H1 (cell line): ENCODE measurements at regions of chr1 and their contacts with region 1.

Region 1: DNA sequence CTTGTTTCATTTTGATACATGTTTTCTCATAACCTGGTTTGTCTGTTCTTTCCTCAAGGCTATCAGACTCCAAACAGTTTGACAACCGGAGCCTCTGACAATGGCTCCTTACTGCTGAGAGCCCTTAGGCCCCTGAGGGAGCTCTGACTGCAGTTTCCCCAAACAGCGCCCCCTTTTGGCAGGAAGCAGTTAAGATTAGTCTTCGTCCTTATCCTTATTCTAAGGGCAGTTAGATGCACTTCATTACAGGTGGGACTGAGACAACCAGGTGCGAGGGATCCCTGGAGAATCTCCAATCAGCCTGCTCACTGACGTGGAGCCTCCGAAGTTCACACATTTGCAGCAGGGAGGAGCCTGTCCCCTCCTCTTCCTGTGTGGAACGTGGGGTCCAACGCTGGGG is 393.1 kb downstream of the BRINP3 start:
- DNase-seq: peak; percentile 65 to 86
- H3K4me3 ChIP-seq: no peak overlapping the region
- H3K27ac ChIP-seq: no peak overlapping the region
- H3K4me1 ChIP-seq: no peaks in the 10 kb centered on the region
- H3K27me3 ChIP-seq: no peaks in the 10 kb centered on the region
- CTCF ChIP-seq: peak; percentile 57 to 83 (median 74)
- EP300 ChIP-seq: no peak
- POLR2A ChIP-seq: no peak
- RAD21 ChIP-seq: peak; percentile 61 to 73

Region 2: GRCh38 chr1:189740777-189741176 is 343.8 kb before region 1 on chr1:
- CTCF ChIA-PET with region 1: no interaction called
- POLR2A ChIA-PET with region 1: no interaction called
- DNase-seq: no peak
- H3K4me3 ChIP-seq: no peak overlapping the region
- H3K27ac ChIP-seq: no peak overlapping the region
- H3K4me1 ChIP-seq: no peaks in the 10 kb centered on the region
- H3K27me3 ChIP-seq: no peaks in the 10 kb centered on the region
- CTCF ChIP-seq: no peak
- EP300 ChIP-seq: no peak
- POLR2A ChIP-seq: no peak
- RAD21 ChIP-seq: no peak

Region 3: DNA sequence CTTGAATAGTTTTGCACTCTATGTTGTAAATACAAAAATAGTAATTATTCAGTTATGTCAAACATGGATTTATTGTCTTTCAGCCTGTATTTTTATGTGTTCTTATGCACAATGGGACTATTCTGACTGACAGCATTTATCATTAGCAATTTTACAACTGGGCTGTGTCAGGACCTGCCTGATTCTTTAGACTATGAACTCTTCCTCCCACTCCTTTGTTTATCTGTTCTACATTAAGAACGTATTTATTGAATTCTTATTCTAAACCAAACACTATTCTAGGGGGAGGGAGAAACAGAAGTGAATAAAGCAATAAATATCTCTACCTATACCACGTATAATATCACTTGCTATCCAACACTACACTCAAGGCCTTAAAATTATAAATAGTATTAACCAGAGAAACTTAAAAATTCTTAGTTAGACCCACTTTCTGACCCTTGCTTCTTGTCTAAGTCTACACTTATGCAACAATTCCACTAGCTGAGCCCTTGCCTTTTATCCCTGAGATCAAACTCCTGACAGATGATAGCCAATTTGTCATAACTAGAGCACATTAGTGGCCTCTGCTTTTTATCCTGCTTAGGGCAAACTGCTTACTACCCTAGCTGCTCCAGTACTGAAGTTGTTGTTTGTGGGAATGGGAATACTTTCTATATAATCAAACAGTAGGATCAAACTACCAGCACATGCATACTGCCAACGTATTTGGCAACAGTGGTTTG is 101.2 kb before region 1 on chr1:
- CTCF ChIA-PET with region 1: no interaction called
- POLR2A ChIA-PET with region 1: no interaction called
- DNase-seq: no peak
- H3K4me3 ChIP-seq: no peak overlapping the region
- H3K27ac ChIP-seq: no peak overlapping the region
- H3K4me1 ChIP-seq: no peaks in the 10 kb centered on the region
- H3K27me3 ChIP-seq: no peaks in the 10 kb centered on the region
- CTCF ChIP-seq: no peak
- EP300 ChIP-seq: no peak
- POLR2A ChIP-seq: no peak
- RAD21 ChIP-seq: no peak

Region 4: DNA sequence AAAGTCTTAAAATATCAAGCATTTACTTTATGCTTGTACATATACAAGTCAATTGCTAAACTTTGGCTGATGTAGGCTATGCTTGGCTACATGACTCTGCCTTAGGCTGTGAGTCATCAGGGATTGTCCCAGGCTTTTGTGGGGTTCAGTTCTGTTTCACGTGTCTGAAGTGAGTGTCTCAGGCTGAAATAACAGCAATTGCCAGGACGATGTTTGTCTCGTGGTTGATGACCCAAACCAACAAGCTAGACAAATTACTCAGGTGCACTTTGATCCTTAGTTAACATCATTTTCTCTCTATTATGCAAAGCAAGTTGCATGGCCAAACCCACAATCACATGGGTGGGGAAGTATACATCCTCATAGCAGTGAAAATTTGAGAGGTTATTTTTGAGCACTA is 17.0 kb before region 1 on chr1:
- CTCF ChIA-PET with region 1: interaction called, 17 read pairs
- POLR2A ChIA-PET with region 1: interaction called, 3 read pairs
- DNase-seq: no peak
- H3K4me3 ChIP-seq: no peak overlapping the region
- H3K27ac ChIP-seq: no peak overlapping the region
- H3K4me1 ChIP-seq: no peaks in the 10 kb centered on the region
- H3K27me3 ChIP-seq: no peaks in the 10 kb centered on the region
- CTCF ChIP-seq: no peak
- EP300 ChIP-seq: no peak
- POLR2A ChIP-seq: no peak
- RAD21 ChIP-seq: no peak

Region 5: DNA sequence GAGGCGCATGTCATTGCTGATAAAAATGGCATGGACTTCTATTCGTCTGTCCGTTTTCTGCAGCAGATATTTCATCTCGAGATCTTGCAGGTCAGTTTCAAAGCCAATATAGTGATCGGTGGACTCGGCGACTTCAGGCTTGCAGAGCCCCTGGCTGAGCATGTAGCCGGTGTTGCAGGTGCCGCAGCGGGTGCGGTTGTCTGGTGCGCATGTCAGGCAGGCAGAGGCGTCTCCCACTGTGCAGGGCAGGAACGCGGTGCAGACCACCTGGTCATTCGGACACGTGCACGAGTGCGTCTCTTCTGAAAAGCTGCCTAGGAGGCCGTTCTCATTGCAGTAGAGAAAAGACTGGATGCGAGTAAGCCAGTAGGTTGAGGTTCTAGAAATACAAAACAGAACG is 14.2 kb after region 1 on chr1:
- CTCF ChIA-PET with region 1: interaction called, 11 read pairs
- POLR2A ChIA-PET with region 1: no interaction called
- DNase-seq: no peak
- H3K4me3 ChIP-seq: no peak overlapping the region
- H3K27ac ChIP-seq: no peak overlapping the region
- H3K4me1 ChIP-seq: no peaks in the 10 kb centered on the region
- H3K27me3 ChIP-seq: no peaks in the 10 kb centered on the region
- CTCF ChIP-seq: no peak
- EP300 ChIP-seq: no peak
- POLR2A ChIP-seq: no peak
- RAD21 ChIP-seq: no peak

Region 6: GRCh38 chr1:190129366-190129765 is 44.8 kb after region 1 on chr1:
- CTCF ChIA-PET with region 1: no interaction called
- POLR2A ChIA-PET with region 1: no interaction called
- DNase-seq: no peak
- H3K4me3 ChIP-seq: no peak overlapping the region
- H3K27ac ChIP-seq: no peak overlapping the region
- H3K4me1 ChIP-seq: no peaks in the 10 kb centered on the region
- H3K27me3 ChIP-seq: no peaks in the 10 kb centered on the region
- CTCF ChIP-seq: no peak
- EP300 ChIP-seq: no peak
- POLR2A ChIP-seq: no peak
- RAD21 ChIP-seq: no peak